A549 (cell line): ENCODE measurements at regions of chr2 and their contacts with region 1.

Region 1: DNA sequence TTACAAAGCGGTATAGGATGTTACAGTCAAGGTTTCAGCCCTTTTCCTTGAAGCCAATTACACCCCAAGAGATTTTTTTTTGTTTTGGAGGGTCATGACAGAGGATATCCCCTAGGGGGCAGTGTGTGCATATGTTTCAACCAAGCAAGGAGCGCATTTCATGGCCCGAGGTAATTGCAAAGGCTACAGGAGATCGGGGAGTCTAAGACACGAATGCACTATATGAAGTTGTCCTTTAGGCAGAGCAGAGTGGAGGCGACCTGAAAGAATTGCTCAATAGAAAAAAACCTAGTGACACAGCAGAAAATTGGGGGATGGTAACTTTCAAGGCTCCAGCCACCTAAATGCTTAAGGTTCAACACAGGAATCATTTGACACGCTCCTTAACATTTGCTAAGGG is 219.8 kb upstream of the PARD3B start:
- DNase-seq: peak; percentile 49 to 82
- ATAC-seq: peak; percentile 85 to 90
- H3K4me3 ChIP-seq: no peak overlapping the region
- H3K27ac ChIP-seq: 0 out of 6 replicates have a peak overlapping the region, but pooled peaks of 1 of the 2 experiments have one; percentile 38
- H3K4me1 ChIP-seq: peaks cover 16% of the 10 kb centered on the region; the same call in 2 of the 3 replicates
- CTCF ChIP-seq: peak; percentile 94
- EP300 ChIP-seq: no peak
- POLR2A ChIP-seq: no peak
- RAD21 ChIP-seq: peak; percentile 94 to 96

Region 2: GRCh38 chr2:204312105-204312504 is 13.4 kb before region 1 on chr2:
- CTCF ChIA-PET with region 1: interaction called, 10 read pairs
- POLR2A ChIA-PET with region 1: no interaction called
- DNase-seq: no peak
- ATAC-seq: no peak
- H3K4me3 ChIP-seq: no peak overlapping the region
- H3K27ac ChIP-seq: no peak overlapping the region
- H3K4me1 ChIP-seq: no peaks in the 10 kb centered on the region
- CTCF ChIP-seq: no peak
- EP300 ChIP-seq: no peak
- POLR2A ChIP-seq: no peak
- RAD21 ChIP-seq: no peak

Region 3: DNA sequence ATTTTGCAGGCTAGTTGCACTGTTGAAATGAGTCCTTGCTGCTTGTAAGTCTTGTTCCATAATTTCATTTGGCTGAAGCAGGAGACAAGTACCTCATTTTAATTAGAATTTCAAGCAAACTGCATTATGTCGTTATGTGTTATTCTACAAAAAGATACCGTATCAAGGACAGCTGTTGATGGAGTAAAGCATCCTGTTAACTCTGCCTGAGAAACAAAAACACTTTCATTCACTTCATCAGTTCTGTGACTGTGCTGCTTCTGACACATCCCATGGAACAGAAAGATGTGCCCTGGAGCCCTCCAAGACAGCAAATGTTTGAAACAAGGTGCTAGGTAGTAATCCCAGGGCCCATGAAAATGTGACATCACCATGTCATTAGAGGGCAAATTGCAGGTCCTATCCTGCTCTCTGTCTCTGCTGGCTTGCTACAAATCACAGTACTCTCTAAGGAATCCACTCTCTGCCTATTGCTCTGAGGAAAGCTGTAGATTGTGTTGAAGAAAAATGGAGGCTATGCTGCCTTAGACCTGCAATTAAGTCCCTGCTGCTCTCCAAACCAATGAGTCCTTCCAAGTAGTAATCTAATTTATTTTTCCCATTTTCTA is 10.1 kb after region 1 on chr2:
- CTCF ChIA-PET with region 1: interaction called, 12 read pairs
- POLR2A ChIA-PET with region 1: no interaction called
- DNase-seq: no peak
- ATAC-seq: no peak
- H3K4me3 ChIP-seq: no peak overlapping the region
- H3K27ac ChIP-seq: no peak overlapping the region
- H3K4me1 ChIP-seq: peaks cover 18% of the 10 kb centered on the region
- CTCF ChIP-seq: no peak
- EP300 ChIP-seq: no peak
- POLR2A ChIP-seq: no peak
- RAD21 ChIP-seq: no peak

Region 4: GRCh38 chr2:204691911-204692510 is 366.5 kb after region 1 on chr2:
- CTCF ChIA-PET with region 1: interaction called, 28 read pairs
- POLR2A ChIA-PET with region 1: no interaction called
- DNase-seq: peak; percentile 36 to 86
- ATAC-seq: peak; percentile 91
- H3K4me3 ChIP-seq: no peak overlapping the region
- H3K27ac ChIP-seq: no peak overlapping the region
- H3K4me1 ChIP-seq: peaks cover 5% of the 10 kb centered on the region; the same call in 2 of the 3 replicates
- CTCF ChIP-seq: peak; percentile 80
- EP300 ChIP-seq: no peak
- POLR2A ChIP-seq: no peak
- RAD21 ChIP-seq: peak; percentile 89